Activated naive CD4-positive, alpha-beta T cell treated with anti-CD3 and anti-CD28 coated beads, Interleukin-2, amount 10 ng/mL, durations not matched to agents 7 days and 5 days (primary cell): ENCODE measurements at regions of chr9 and their contacts with region 1.

Region 1: DNA sequence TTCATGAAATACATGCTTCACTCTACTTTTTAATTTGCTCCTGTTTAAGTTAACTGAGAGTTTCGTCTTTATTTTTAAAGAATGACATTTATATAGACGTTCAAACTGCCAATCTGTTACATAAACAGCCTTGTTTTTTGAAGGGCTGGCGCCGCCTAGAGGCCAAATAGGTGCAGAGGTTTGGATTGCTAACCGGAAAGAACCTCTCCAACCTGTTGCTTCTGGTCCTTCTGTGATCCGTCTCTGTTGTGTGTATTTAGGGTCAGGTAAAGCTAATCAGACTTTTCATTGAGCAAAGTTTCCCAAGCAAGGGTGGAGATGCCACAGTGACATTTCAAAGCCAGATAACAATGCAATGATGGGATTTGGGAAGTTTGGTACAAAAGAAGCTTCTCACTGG is 39.5 kb upstream of the GLIS3 start:
- DNase-seq: peak; percentile 87
- H3K4me3 Mint-ChIP-seq: no peak overlapping the region
- H3K27ac Mint-ChIP-seq: peak overlapping the region; percentile 56
- H3K4me1 Mint-ChIP-seq: peaks cover 3% of the 10 kb centered on the region
- H3K27me3 Mint-ChIP-seq: no peaks in the 10 kb centered on the region

Region 2: DNA sequence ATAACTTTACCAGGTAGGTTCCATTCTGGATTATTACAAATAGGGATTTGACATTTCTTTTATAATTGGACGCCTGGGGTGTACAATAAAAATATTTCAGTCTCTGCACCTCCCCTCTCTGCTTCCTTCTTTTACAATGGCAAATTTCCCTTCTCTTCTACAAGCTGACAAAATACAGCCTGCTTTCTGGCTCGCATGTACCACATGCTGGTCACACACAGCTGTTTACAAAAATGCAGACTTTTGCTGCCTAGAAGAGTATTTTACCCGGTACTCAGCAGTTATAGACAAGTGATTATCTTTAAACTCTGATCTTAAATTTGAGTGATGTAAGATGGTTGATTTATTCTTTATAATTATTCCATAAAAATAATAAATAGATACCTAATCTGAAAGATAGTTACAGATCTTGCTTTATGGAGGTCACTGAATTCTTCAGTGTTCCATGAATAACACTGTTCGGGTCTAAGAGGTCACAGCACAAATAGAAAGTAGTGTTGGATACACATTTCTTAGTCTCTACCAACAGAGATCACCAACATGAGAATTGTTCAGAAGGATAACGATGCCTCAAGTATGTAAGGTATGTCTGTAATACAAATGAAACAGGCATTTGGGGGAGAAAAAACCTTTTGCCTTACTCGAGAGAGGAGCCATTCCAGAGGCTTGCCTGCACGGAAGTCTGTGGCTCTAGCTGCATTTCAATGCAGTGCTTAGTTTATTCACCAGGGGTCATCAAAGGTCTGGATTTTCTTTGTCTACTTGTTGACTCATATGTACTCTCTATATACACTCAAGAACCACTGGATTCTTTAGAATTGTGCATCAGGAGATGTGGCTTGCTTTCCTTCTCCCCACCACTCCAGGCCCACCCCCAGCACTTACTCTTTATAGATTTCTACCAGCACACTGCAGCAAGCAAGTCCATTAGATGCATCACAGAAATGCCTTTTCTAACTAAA is 607.0 kb before region 1 on chr9:
- CTCF ChIA-PET with region 1: interaction called, 11 read pairs
- DNase-seq: peak; percentile 38
- H3K4me3 Mint-ChIP-seq: no peak overlapping the region
- H3K27ac Mint-ChIP-seq: no peak overlapping the region
- H3K4me1 Mint-ChIP-seq: peaks cover 13% of the 10 kb centered on the region
- H3K27me3 Mint-ChIP-seq: no peaks in the 10 kb centered on the region

Region 3: GRCh38 chr9:4297151-4297785 is 42.1 kb before region 1 on chr9:
- CTCF ChIA-PET with region 1: interaction called, 12 read pairs
- DNase-seq: peak; percentile 49
- H3K4me3 Mint-ChIP-seq: peak overlapping the region; percentile 79
- H3K27ac Mint-ChIP-seq: peak overlapping the region; percentile 81
- H3K4me1 Mint-ChIP-seq: peaks cover 17% of the 10 kb centered on the region
- H3K27me3 Mint-ChIP-seq: peaks cover 65% of the 10 kb centered on the region

Region 4: DNA sequence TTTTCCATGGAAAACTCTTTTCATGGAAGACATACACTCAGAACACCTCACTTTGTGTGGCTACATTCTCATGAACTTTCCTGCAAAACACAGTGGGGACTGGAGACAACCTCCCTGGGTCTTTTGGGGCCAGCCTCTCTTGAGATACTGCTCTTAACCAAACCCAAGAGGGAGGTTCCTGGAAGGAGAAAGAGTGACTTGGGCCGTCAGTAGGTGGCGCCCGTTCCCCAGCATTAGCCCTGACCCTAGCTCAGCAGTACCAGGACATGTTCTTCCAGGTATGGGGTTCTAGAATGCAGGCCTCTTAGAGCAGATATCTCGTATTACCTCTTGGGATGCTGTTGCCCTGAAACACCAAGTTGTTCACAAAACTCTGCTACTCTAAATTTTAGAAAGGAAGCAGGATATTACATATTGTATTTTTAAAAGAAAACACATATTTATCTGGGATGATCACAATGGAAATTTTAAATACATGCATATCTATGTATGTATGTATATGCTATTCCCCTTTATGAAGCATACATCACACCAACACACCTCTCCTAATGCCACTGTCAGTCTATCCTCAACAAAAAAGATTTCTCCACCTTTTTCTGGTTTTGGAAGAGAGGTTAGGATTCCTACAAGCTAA is 23.7 kb before region 1 on chr9:
- CTCF ChIA-PET with region 1: interaction called, 69 read pairs
- DNase-seq: peak; percentile 83
- H3K4me3 Mint-ChIP-seq: no peak overlapping the region
- H3K27ac Mint-ChIP-seq: no peak overlapping the region
- H3K4me1 Mint-ChIP-seq: no peaks in the 10 kb centered on the region
- H3K27me3 Mint-ChIP-seq: peaks cover 12% of the 10 kb centered on the region

Region 5: GRCh38 chr9:4327504-4328191 is 11.7 kb before region 1 on chr9:
- CTCF ChIA-PET with region 1: interaction called, 19 read pairs
- DNase-seq: no peak
- H3K4me3 Mint-ChIP-seq: no peak overlapping the region
- H3K27ac Mint-ChIP-seq: no peak overlapping the region
- H3K4me1 Mint-ChIP-seq: peaks cover 5% of the 10 kb centered on the region
- H3K27me3 Mint-ChIP-seq: peaks cover 3% of the 10 kb centered on the region

Region 6: DNA sequence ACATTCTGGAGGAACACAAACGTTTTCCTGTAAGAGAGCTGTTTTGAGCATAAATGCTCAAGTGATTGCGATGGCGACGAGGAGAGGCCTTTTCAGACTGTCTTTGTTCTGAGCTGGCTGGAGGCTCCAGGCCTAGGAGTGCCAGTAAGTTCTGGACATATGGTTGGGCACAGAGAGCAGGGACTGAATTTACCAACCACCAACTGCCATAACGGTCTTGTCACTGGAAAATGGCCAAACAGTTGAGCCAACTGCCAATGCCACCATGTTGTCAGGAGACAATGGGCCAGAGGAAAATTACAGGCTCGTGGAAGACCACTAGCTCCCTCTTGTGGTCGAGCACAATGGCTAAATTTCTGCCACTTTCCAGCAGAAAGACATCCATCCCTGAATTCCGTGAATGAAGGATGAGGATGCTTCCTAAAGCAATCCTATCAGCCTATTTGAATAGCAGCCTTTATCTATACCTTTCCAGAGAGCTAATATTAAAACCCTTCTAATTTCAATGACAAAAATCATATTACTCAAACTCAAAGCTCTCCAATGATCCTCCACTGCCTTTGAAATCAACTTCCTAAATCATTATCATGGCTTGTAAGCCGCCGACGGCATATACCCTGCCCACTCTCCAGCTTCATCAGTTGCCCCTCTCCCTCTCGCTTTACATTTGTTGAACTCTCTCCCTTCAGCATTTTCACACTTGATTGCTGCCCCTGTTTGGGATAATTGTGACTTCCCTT is 27.4 kb after region 1 on chr9:
- CTCF ChIA-PET with region 1: interaction called, 29 read pairs
- DNase-seq: peak; percentile 46
- H3K4me3 Mint-ChIP-seq: no peak overlapping the region
- H3K27ac Mint-ChIP-seq: no peak overlapping the region
- H3K4me1 Mint-ChIP-seq: no peaks in the 10 kb centered on the region
- H3K27me3 Mint-ChIP-seq: peaks cover 5% of the 10 kb centered on the region